Posterior vena cava (tissue), 2 donors: ENCODE measurements at regions of chr7 and their contacts with region 1.

Region 1: DNA sequence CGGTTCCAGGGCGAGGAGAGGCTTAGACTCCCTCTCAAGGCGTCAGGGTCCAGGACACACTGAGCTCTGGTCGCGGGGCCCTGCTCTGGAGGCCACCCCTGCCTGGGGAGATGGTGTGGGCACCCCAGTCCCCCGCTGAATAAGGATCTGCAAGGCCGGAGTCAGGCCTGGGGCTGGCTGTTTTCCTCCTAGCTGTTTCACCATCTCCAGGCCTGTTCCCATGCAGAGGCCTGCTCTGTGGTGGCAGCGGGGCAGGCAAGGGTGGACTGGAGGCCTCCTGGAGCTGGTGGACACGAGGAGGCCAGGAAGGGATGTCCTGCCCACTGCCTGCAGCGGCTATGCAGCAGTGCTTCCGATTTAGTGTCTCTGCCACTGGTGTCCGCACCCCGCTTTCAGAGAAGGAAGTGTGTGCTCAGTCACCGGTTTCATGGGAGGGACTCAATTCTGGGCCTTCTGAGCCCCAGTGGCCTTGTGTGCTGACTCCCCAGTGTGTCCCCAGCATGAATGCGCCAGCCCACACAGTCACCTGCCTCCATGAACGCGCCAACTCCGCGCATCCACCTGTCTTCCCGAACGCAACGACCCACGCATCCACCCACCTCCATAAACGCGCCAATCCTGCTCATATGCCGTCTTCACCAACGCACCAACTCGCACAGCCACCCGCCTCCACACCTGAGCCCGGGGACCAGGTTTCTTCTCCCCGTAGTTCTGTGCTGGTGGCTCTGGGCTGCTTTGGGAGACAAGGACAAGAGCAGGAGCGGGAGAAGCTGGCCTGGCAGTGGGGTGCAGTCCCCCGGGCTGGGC is 14.5 kb upstream of the GPR146 start:
- DNase-seq: no peak

Region 2: GRCh38 chr7:1447551-1448244 is 417.9 kb after region 1 on chr7:
- intact Hi-C with region 1: loop called in 1 of 2 experiments (anchors 5 kb)
- DNase-seq: no peak